ENCODE measurements at regions of chr1 and their contacts with region 1.

Region 1: GRCh38 chr1:26994020-26994786 is 711 bp downstream of the TRNP1 start:
- DNase-seq: no peak
- H3K27ac ChIP-seq: peak overlapping the region; percentile 99
- CTCF ChIP-seq: no peak

Region 2: DNA sequence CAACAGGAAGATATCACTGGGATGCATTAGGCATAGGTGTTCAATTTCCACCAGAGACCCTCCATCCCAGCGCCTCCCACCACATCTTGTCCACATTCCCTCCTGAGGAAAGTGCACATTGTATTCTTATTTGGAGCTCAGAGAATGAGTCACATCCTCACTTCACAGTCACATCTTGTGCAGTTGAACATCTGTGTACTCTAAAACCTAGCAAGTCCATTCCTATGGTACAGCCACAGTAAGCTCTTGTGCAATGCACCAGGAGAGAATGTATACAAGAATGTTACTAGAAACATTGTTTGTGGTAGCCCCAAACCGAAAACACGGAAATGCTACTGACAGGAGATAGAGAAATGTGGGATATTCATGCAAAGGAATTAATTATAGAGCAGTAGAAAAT is 32.4 kb before region 1 on chr1:
- CTCF ChIA-PET with region 1: interaction called, 13 read pairs
- POLR2A ChIA-PET with region 1: interaction called, 6 read pairs
- DNase-seq: peak; percentile 78
- H3K27ac ChIP-seq: peak overlapping the region; percentile 94
- CTCF ChIP-seq: no peak

Region 3: DNA sequence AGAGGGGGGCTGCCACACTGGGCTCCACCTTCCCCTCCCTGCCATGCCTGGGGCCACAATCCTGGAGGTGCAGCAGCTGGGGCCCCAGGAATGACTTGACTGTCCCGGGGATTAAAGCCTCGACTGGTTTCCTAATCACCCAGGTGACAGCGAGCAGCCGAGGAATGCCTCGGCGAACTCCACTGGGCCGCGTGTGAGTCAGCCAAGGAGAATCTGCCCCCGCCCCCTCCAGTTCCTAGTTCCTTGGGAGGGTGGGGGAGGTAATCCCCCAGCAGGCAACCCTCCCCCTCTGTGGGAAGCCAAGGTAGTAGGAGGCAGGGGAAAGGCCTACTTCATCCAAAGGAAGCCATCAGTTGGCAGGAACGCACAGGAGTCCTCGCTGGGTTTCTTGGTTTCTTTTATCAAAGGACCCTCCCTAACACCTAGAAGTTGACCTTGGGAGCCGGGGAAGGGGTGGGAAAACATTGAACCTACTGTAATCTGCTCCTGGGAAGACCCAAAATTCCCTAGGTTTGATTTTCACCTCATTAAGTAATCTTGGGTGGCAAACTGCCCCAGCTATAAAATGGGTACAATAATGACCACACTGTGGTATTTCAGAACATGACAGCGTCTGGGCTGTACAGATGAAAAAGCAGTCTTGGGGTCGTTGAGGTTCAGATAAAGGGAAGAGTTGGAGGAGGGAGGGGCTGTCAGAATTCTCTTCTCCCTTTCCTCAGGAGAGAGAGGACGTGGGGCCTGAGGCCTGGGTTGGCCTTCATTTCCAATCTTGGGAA is 17.0 kb after region 1 on chr1:
- CTCF ChIA-PET with region 1: interaction called, 26 read pairs
- POLR2A ChIA-PET with region 1: interaction called, 21 read pairs
- DNase-seq: peak; percentile 98
- H3K27ac ChIP-seq: peak overlapping the region; percentile 99
- CTCF ChIP-seq: no peak

Region 4: DNA sequence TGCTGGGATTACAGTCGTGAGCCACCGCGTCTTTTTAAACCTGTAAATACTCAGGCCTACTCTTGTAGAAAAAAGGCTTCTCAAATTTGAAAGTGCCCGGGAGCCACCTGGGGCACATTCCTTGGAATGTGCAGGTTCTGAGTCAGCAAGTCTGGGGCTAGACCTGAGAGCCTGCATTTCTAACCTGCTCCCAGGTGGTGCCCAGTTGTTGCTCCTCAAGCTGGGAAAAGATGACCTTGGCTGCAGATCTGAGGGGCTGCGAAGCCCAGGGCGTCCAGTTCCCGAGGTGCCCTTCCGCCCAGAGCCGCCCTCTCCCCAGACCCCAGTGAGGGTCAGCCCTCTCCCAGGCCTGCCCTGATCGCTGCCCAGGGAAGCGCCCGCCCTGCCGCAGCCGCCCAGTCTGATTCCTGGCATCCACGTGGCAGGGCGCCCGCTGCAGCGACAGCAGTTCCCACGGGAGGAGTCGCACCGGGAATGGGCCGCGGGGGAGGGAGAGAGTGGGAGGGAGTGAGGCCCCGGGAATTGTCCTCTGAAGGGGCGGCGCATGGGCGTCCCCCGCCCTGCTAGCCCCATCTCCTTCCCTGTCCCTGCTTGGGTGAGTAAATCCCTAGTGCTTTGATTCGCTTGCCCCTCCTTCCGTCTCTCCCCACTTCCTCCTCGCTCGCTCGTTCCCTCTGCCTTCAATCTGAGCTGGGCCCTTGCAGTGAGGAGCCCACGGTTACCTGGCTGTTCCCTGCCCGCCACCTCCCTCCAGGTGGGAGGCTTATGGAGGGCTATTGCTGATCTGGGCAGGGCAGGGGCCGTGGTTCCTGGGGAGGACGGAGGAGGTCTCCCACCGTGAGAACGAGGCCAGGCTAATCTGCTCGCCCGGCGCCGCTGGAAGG is 37.3 kb after region 1 on chr1:
- CTCF ChIA-PET with region 1: interaction called, 24 read pairs
- POLR2A ChIA-PET with region 1: interaction called, 19 read pairs
- DNase-seq: peak; percentile 89
- H3K27ac ChIP-seq: peak overlapping the region; percentile 95
- CTCF ChIP-seq: no peak

Region 5: DNA sequence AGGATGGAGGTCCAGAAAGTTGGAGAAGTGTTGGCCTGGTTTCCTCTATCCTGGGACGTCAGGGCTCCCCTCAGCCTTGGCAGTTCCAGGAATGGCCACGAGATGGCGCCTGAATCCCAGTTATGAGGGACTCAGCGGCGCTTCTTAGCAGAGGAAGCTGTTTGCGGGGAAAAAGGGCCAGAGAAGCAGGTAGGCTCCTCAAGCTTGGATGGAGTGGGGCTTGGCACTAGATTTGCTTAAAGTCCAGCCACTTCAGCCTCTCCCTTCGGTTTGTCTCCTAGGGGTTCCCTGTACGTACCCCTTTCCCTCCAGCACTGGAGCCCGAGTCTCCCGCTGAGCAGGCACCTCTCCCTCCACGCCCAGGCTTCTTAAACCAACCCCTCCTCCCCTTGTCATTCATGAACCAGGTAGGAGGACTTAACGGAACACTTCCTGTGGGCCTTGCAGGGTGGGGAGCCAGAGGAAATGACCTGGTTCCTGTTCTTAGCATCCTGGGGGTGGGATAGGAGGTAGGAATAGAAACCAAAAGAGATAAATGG is 50.5 kb after region 1 on chr1:
- CTCF ChIA-PET with region 1: interaction called, 23 read pairs
- POLR2A ChIA-PET with region 1: no interaction called
- DNase-seq: peak; percentile 77
- H3K27ac ChIP-seq: peak overlapping the region; percentile 18; the same call in 1 of the 2 replicates
- CTCF ChIP-seq: peak; percentile 91

Region 6: GRCh38 chr1:27097484-27097917 is 103.3 kb after region 1 on chr1:
- CTCF ChIA-PET with region 1: interaction called, 17 read pairs
- POLR2A ChIA-PET with region 1: no interaction called
- DNase-seq: peak; percentile 90
- H3K27ac ChIP-seq: peak overlapping the region; percentile 96
- CTCF ChIP-seq: peak; percentile 97

Measured in RWPE1 (cell line).